ENCODE measurements at regions of chr4 and their contacts with region 1.

Region 1: DNA sequence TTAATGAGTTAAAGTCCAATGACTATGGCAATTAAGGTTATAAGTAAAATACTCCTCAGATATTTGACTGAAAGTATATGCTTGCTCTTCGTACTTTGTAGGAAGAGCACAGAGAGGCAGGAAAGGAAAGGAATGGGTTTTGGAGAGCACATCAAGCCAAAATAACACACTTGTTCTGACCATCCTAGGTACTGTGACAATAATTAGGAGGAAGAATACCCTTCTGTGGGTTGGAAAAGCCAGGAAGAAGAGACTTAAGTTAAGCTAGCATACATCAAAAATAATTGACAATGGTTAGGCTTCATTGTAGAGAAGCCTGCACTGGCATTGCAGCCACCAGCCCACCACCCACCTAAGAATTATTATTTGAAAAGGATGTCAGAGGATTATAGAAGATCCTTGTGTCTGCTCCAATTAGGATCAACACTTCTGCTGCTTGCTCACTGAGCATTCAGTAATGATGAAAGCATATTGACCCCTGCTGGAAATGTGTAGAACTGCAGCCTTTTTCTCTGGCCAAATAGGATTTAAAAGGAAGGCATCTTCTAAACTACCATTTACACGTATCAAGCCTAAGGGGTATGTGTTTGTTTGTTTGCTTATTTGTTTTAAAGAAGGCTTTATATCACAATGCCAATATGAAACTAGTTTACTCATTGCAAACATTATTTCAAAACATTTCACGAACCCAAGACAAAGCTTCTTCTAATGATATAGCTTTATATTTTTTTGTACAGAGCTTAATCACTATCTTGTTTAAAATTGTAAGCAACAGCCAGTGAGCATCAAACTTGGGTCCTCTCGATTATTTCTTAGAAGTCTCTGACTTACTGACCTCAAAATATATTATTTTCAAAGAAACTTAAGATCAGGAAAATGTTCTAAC is 286.2 kb upstream of the TET2 start:
- DNase-seq: peak; percentile 90
- ATAC-seq: peak; percentile 33
- H3K4me3 ChIP-seq: no peak overlapping the region
- H3K27ac ChIP-seq: no peak overlapping the region
- H3K4me1 ChIP-seq: no peaks in the 10 kb centered on the region
- H3K27me3 ChIP-seq: no peaks in the 10 kb centered on the region
- CTCF ChIP-seq: peak; percentile 83

Region 2: DNA sequence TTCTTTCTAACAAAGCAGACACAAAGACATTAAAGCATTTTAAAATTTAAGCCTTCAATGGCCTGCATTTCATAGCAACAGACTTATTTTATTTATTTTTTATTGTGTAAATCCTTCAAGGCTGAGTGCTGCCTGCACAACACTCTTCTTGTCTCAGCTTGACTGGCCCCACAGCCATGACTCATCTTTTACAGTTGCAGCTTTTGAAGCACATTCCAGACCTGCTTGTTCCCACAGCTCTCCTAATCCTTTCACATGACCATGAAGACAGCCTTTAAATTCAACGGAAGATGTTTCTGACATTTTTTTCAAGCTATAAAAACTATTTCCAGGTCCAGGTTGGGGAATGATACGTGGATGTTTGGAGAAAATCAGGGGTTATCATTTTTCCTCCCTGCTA is 863.8 kb before region 1 on chr4:
- CTCF ChIA-PET with region 1: no interaction called
- POLR2A ChIA-PET with region 1: no interaction called
- intact Hi-C with region 1: loop called (anchors 1 kb)
- DNase-seq: peak; percentile 72
- ATAC-seq: peak; percentile 99
- H3K4me3 ChIP-seq: no peak overlapping the region
- H3K27ac ChIP-seq: peak overlapping the region; percentile 14; the same call in 1 of the 2 replicates
- H3K4me1 ChIP-seq: peaks cover 12% of the 10 kb centered on the region; the same call in 1 of the 2 replicates
- H3K27me3 ChIP-seq: no peaks in the 10 kb centered on the region
- CTCF ChIP-seq: no peak

Region 3: GRCh38 chr4:104015680-104016253 is 844.7 kb before region 1 on chr4:
- CTCF ChIA-PET with region 1: no interaction called
- POLR2A ChIA-PET with region 1: no interaction called
- intact Hi-C with region 1: loop called (anchors 2 kb)
- DNase-seq: peak; percentile 30
- ATAC-seq: peak; percentile 57; the same call in 1 of the 2 replicates
- H3K4me3 ChIP-seq: no peak overlapping the region
- H3K27ac ChIP-seq: no peak overlapping the region
- H3K4me1 ChIP-seq: no peaks in the 10 kb centered on the region
- H3K27me3 ChIP-seq: no peaks in the 10 kb centered on the region
- CTCF ChIP-seq: peak; percentile 55

Region 4: DNA sequence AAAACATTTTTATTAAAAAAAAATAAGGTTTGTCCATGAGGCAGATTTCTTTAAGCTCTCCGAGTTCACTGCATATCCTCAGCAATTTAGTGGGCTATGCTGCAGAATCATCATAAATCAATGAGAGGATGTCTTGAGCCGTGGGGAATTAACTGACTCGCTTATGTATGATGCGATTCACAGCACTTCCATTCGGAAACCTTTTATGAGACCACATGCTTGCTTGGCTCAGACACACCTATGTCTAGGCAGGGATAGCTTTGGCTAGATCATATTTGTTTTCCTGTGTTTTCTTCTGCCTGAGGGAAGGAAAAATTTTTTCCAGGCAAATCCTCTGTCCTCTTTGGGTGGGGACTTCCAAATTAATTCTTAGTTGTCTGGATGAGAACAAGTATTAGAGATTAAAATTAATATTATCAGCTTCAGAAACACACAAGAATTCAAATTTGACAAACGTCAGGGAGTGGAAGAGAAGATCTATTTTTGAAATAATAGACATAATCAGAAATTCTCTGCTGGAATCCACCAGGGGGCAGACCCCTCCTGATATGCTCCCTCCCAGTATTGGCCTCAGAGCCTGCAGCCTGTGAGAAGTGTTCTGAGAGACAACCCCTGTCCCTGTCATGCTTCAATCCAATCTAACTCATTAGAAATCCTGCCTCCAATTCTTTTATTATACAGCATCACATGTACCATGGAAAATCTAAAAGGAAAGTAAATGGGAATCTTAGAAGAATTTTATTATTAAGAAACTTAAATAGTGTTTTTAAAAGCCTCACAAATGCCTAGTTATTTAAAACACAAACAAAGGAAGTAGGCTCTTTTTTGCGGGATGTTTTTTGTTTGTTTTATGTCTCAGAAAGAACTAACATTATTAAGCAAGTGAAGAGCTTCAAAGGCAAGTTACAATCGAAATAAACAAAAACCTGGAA is 795.6 kb before region 1 on chr4:
- CTCF ChIA-PET with region 1: no interaction called
- POLR2A ChIA-PET with region 1: no interaction called
- intact Hi-C with region 1: loop called (anchors 1 kb)
- DNase-seq: peak; percentile 54
- ATAC-seq: peak; percentile 80
- H3K4me3 ChIP-seq: no peak overlapping the region
- H3K27ac ChIP-seq: no peak overlapping the region
- H3K4me1 ChIP-seq: no peaks in the 10 kb centered on the region
- H3K27me3 ChIP-seq: no peaks in the 10 kb centered on the region
- CTCF ChIP-seq: peak; percentile 68

Region 5: GRCh38 chr4:104693599-104694201 is 166.8 kb before region 1 on chr4:
- CTCF ChIA-PET with region 1: no interaction called
- POLR2A ChIA-PET with region 1: no interaction called
- intact Hi-C with region 1: loop called (anchors 1 kb)
- DNase-seq: peak; percentile 64
- ATAC-seq: no peak; the same call in 1 of the 2 replicates
- H3K4me3 ChIP-seq: no peak overlapping the region
- H3K27ac ChIP-seq: no peak overlapping the region
- H3K4me1 ChIP-seq: no peaks in the 10 kb centered on the region
- H3K27me3 ChIP-seq: no peaks in the 10 kb centered on the region
- CTCF ChIP-seq: peak; percentile 69

Region 6: DNA sequence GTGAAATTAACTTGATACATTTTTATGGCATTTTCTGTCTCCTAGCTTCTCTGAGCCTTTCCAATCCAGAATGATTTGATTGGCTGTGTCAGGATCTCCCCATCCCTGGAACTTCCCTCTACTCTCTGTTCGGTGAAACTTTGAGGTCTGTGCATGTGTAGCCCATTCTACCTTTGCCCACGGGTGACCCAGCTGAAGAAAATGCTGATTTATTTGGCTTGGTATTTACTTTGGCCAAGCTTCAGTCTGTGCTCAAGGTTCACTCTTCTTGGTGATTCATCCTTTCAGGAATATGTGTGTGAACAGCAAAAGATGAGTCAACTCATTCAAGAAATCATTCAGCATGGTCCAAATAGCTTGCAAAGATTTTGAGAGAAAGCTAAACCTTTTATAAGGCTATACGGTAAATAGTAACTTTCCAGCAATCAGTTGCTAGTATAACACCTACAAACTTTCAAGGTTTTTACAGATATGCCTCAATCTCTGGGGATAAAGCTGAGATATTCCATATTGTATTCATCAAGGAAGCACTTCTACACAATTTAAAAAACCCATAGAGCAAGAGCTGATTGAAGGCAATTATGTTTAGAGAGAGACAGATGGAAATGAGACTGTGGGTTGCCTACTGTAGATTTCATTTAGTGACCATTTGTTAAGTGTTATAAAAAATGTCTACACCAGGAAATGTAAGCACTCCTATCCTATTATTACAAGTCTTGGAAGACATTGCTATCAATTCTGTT is 131.9 kb before region 1 on chr4:
- CTCF ChIA-PET with region 1: no interaction called
- POLR2A ChIA-PET with region 1: no interaction called
- intact Hi-C with region 1: no loop called
- DNase-seq: peak; percentile 94
- ATAC-seq: peak; percentile 94
- H3K4me3 ChIP-seq: peak overlapping the region; percentile 28; the same call in 1 of the 2 replicates
- H3K27ac ChIP-seq: peak overlapping the region; percentile 95
- H3K4me1 ChIP-seq: peaks cover 33% of the 10 kb centered on the region
- H3K27me3 ChIP-seq: no peaks in the 10 kb centered on the region
- CTCF ChIP-seq: no peak

Region 7: GRCh38 chr4:105698607-105699006 is 838.1 kb after region 1 on chr4:
- CTCF ChIA-PET with region 1: no interaction called
- POLR2A ChIA-PET with region 1: no interaction called
- intact Hi-C with region 1: no loop called
- DNase-seq: no peak
- ATAC-seq: no peak
- H3K4me3 ChIP-seq: no peak overlapping the region
- H3K27ac ChIP-seq: no peak overlapping the region
- H3K4me1 ChIP-seq: 0 out of 2 replicates have a peak, but pooled peaks cover 2% of the 10 kb centered on the region
- H3K27me3 ChIP-seq: no peaks in the 10 kb centered on the region
- CTCF ChIP-seq: no peak

Measured in PC-3 (cell line).